ENCODE measurements at regions of chr11 and their contacts with region 1.

Region 1: GRCh38 chr11:11923828-11924227 is 82.1 kb downstream of the USP47 start:
- DNase-seq: no peak
- H3K4me3 ChIP-seq: no peak overlapping the region
- H3K27ac ChIP-seq: no peak overlapping the region
- H3K4me1 ChIP-seq: no peaks in the 10 kb centered on the region
- H3K27me3 ChIP-seq: no peaks in the 10 kb centered on the region
- CTCF ChIP-seq: no peak
- POLR2A ChIP-seq: no peak

Region 2: GRCh38 chr11:11913395-11913794 is 10.4 kb before region 1 on chr11:
- intact Hi-C with region 1: loop called (anchors 1 kb)
- DNase-seq: no peak
- H3K4me3 ChIP-seq: no peak overlapping the region
- H3K27ac ChIP-seq: no peak overlapping the region
- H3K4me1 ChIP-seq: peaks cover 0 to 8% of the 10 kb centered on the region in 2 donors
- H3K27me3 ChIP-seq: no peaks in the 10 kb centered on the region
- CTCF ChIP-seq: no peak
- POLR2A ChIP-seq: no peak

Measured in breast epithelium (tissue), 4 donors.